Right ventricle myocardium superior (tissue), 1 donor: ENCODE measurements at regions of chr15 and their contacts with region 1.

Region 1: GRCh38 chr15:42548253-42549031 is at the starts of genes HAUS2 and LRRC57:
- DNase-seq: peak; percentile 93
- ATAC-seq: peak; percentile 97
- total RNA-seq, gene HAUS2: 9.1 TPM
- total RNA-seq, gene LRRC57: 11.9 TPM

Region 2: GRCh38 chr15:42371125-42371524 is 177.3 kb before region 1 on chr15:
- intact Hi-C with region 1: no loop called
- DNase-seq: no peak
- ATAC-seq: no peak

Region 3: GRCh38 chr15:42401544-42402454 is 146.6 kb before region 1 on chr15:
- intact Hi-C with region 1: no loop called
- DNase-seq: no peak
- ATAC-seq: no peak

Region 4: GRCh38 chr15:42474827-42475226 is 73.6 kb before region 1 on chr15:
- intact Hi-C with region 1: no loop called
- DNase-seq: no peak
- ATAC-seq: no peak

Region 5: GRCh38 chr15:42640103-42640502 is 91.7 kb after region 1 on chr15:
- intact Hi-C with region 1: loop called (anchors 10 kb)
- DNase-seq: no peak
- ATAC-seq: no peak

Region 6: GRCh38 chr15:42858540-42858939 is 310.1 kb after region 1 on chr15:
- intact Hi-C with region 1: no loop called
- DNase-seq: no peak
- ATAC-seq: peak; percentile 57